Ascending aorta (tissue), 2 donors: ENCODE measurements at regions of chr20 and their contacts with region 1.

Region 1: DNA sequence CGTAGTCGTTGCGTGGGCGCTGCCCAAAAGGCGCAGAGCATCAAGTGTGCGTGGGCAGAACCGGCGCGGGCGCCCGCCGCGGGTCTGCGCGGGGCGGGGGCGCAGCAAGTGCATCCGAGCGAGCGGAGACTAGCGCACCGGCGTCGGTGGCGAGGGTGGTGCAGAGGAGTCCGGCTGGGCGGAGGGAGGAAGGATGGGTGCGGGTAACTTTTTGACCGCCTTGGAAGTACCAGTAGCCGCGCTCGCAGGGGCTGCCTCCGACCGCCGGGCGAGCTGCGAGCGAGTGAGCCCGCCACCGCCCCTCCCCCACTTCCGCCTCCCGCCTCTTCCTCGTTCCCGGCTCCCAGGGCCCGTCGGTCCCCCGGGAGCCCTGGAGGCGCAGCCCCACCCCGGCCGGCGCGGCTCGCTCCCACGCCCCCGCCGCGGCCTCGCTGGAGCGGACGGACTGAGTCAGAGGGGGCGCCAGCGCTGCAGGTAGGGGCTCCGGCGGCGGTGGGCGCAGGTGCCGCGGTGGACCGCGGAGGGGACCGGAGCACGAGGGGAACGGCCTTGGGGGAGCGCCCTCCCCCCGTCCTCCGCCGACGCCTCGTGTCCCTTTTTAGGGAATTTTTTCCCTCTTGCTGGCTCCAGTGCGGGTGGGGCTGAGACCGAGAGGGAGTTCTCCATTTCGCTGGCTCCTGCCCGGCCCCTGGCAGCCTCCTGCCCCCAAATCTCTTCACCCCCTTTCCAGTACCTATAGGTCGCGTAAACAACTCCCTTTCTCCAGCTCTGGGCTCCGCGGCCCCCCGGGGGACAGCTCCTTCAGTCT is 1.6 kb upstream of the DBNDD2 start:
- DNase-seq: peak; percentile 38 to 90
- H3K4me3 ChIP-seq: peak overlapping the region; percentile 81 to 98
- H3K27ac ChIP-seq: peak overlapping the region; percentile 95 to 99
- H3K4me1 ChIP-seq: peaks cover 9 to 20% of the 10 kb centered on the region in 2 donors
- H3K27me3 ChIP-seq: no peaks in the 10 kb centered on the region
- CTCF ChIP-seq: no peak

Region 2: GRCh38 chr20:44966030-44966961 is 440.2 kb before region 1 on chr20 and contains the start of gene STK4:
- intact Hi-C with region 1: loop called (anchors 10 kb)
- DNase-seq: peak; percentile 76 to 97
- H3K4me3 ChIP-seq: peak within 1 kb of the TSS; percentile 79 to 96
- H3K27ac ChIP-seq: peak within 1 kb of the TSS; percentile 78 to 83
- H3K4me1 ChIP-seq: peaks cover 10 to 11% of the 10 kb centered on the region in 2 donors
- H3K27me3 ChIP-seq: no peaks in the 10 kb centered on the region
- CTCF ChIP-seq: peak; percentile 21 to 60 (median 53)
- total RNA-seq, gene STK4: 20.6 TPM

Region 3: DNA sequence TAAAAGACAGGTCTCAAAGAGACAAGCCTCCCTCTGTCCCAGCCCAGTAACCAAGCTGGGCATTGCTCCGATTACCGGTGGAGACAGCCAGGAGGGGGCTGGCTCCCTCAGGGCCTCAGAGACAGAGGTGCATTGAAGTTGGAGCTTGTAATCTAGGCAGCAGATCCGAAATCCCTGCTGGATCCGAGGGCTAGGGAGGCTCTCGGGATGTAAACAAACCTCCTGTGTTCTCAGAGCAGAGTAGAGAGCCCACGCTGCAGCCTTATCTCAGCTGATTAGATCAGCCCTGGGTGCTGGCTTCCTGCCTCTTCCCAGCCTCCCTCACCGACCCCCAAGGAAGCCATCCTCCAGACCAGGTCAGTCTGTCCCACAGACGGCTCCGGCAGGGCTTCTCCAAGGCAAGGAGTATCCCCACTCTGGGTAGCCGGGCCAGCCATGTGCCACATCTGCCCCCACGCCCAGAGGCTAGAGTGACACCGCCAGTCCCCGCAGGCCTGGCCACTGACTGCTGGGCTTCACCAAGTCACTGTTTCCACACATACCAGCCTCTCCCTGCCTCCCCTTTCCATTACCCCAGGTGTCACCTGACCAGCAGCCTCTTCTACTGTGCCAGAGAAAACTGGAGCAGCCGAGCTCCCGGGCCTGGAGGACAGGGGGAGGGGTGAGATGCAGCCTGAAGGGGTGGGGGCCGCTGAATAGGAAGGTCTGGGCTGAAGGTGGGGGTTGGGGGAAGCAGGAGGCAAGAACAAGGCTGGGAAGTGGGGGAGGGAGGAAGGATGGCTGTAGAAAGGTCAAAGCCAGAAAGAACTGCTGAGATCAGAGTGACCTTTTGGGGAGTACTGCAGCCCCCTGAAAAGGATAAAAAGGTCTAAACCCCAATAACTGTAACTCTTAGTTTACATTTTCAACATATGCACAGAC is 64.3 kb before region 1 on chr20:
- intact Hi-C with region 1: loop called (anchors 2 kb)
- DNase-seq: peak; percentile 69 to 92
- H3K4me3 ChIP-seq: peak overlapping the region; percentile 18 to 80
- H3K27ac ChIP-seq: peak overlapping the region; percentile 93 to 96
- H3K4me1 ChIP-seq: peaks cover 53 to 80% of the 10 kb centered on the region in 2 donors
- H3K27me3 ChIP-seq: no peaks in the 10 kb centered on the region
- CTCF ChIP-seq: peak in 1 of 3 experiments; percentile 7

Region 4: DNA sequence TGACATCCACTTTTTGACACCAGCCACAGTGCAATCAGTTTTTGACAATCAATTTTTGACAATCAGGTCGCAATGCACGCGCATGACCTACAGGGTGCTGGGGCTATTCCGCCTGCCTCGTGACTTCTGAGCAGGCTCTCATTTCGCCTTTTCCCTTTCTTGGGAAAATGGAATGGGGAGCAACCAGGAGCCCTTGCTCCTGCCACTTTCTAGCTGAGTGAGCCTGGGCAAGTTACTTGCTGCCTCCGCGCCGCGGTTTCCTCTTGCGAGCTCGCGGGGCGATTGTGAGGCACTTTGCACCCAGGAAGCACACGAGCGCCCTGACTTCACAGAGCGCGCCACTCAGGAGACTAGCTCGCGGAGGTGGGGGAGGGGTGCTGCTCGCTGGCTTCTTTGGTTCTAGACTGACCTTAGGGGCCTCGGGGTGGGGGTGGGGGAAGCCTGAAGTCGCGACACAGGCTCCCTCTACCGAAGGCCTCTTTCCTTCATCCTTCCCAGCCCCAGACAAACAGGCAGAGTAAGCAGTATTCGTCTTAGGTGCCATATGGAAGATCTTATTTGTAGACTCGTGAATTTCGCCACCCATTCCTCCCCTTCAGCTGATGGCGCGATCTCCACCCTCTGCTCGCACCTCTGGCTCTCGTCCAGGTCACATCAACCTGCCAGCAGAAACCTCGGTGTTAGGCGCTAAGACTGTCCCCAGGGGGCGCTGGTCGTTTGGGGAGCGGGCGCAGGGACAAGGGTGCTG is 32.9 kb before region 1 on chr20:
- intact Hi-C with region 1: loop called (anchors 1 kb)
- DNase-seq: peak in 1 of 2 donors; percentile 93
- H3K4me3 ChIP-seq: peak overlapping the region; percentile 60 to 65
- H3K27ac ChIP-seq: peak overlapping the region; percentile 84 to 92
- H3K4me1 ChIP-seq: peaks cover 0 to 11% of the 10 kb centered on the region in 2 donors
- H3K27me3 ChIP-seq: no peaks in the 10 kb centered on the region
- CTCF ChIP-seq: peak; percentile 84 to 90 (median 86)